ENCODE measurements at regions of chr17 and their contacts with region 1.

Region 1: GRCh38 chr17:48610282-48611211 is at the start of gene HOXB7:
- DNase-seq: peak; percentile 75 to 91
- ATAC-seq: peak; percentile 11 to 59; a peak in 3 of 6 replicates
- H3K4me3 ChIP-seq: peak within 1 kb of the TSS; percentile 74
- H3K27ac ChIP-seq: peak within 1 kb of the TSS; percentile 93 to 99
- H3K4me1 ChIP-seq: peaks cover 16% of the 10 kb centered on the region
- CTCF ChIP-seq: no peak
- EP300 ChIP-seq: no peak
- POLR2A ChIP-seq: peak; percentile 66
- RAD21 ChIP-seq: no peak
- polyA plus RNA-seq, gene HOXB7: 15.4 and 22.3 TPM in 2 replicates

Region 2: DNA sequence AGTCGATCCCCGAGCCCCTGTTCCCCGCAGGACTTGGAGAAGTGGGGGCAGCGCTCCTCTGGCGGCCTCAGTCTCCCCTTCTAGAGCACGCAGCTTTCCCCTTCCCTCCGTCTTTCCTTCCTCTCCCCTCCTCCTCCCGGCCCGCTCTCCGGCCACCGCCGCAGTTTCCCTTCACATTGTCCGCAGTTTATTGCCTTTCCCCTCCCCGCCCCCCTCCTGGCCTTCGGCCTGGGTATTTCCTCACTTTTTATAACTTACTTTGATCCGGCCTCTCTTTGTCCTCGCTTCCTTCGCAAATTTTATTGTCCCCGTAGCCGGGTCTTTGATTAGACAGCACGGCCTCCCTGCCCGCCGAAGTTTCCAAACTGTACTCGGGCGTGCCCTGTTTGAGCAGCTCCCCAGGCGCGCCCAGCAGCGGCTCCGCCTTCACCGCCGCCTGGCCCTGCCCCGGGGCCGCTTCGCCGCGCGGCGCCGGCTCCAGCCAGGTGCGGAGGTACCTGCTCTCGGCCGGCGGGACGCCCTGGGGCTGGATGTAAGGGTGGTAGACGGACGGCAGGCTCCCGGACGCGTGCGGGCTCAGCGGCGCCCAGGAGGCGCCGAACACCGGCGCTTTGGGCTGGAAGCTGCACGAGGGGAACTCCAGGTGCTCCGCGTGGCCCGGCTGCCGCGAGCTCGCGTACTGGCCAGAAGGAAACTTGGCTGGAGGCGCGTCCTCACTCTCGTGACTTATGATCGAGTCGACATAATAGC is 15.1 kb after region 1 on chr17:
- CTCF ChIA-PET with region 1: interaction called, 10 read pairs
- POLR2A ChIA-PET with region 1: interaction called, 30 read pairs
- DNase-seq: peak; percentile 66 to 84
- ATAC-seq: peak; percentile 66 to 82
- H3K4me3 ChIP-seq: peak overlapping the region; percentile 72
- H3K27ac ChIP-seq: peak overlapping the region; percentile 89 to 95
- H3K4me1 ChIP-seq: peaks cover 15% of the 10 kb centered on the region; the same call in 2 of the 3 replicates
- CTCF ChIP-seq: no peak
- EP300 ChIP-seq: peak in 1 of 2 experiments; percentile 9; a peak in 1 of 5 replicates
- POLR2A ChIP-seq: peak; percentile 45
- RAD21 ChIP-seq: no peak

Region 3: DNA sequence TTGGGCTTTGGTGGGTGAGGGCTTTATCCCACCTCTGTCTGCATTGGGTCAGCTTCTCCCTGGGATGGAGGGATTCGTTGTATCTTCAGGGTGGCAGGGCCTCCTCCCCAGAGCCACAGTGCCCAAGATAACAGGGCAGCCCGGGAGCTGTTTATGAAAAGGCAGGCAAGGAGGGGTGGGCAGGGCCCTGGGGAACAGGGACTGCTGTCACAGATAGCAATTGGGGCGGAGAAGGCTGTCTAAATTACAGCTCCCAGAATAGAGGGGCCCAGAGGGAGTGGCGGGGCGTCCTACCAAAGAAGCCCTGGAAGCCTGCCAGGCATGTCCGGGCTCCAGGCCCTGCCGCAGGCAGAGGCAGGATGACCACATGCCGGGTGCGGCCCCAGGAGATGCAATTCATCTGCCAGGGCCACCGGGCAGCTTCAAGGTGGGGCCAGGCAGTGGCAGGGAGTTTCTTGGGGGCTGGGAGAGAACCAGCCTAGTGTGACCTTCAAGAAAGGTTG is 638.8 kb after region 1 on chr17:
- CTCF ChIA-PET with region 1: no interaction called
- POLR2A ChIA-PET with region 1: no interaction called
- DNase-seq: no peak
- ATAC-seq: peak; percentile 20 to 47; a peak in 5 of 6 replicates
- H3K4me3 ChIP-seq: no peak overlapping the region
- H3K27ac ChIP-seq: peak overlapping the region; percentile 14 to 26; a peak in 2 of 6 replicates
- H3K4me1 ChIP-seq: peaks cover 20% of the 10 kb centered on the region
- CTCF ChIP-seq: no peak
- EP300 ChIP-seq: no peak
- POLR2A ChIP-seq: no peak
- RAD21 ChIP-seq: no peak

Measured in A549 (cell line).